B cell (primary cell): ENCODE measurements at regions of chr6 and their contacts with region 1.

Region 1: DNA sequence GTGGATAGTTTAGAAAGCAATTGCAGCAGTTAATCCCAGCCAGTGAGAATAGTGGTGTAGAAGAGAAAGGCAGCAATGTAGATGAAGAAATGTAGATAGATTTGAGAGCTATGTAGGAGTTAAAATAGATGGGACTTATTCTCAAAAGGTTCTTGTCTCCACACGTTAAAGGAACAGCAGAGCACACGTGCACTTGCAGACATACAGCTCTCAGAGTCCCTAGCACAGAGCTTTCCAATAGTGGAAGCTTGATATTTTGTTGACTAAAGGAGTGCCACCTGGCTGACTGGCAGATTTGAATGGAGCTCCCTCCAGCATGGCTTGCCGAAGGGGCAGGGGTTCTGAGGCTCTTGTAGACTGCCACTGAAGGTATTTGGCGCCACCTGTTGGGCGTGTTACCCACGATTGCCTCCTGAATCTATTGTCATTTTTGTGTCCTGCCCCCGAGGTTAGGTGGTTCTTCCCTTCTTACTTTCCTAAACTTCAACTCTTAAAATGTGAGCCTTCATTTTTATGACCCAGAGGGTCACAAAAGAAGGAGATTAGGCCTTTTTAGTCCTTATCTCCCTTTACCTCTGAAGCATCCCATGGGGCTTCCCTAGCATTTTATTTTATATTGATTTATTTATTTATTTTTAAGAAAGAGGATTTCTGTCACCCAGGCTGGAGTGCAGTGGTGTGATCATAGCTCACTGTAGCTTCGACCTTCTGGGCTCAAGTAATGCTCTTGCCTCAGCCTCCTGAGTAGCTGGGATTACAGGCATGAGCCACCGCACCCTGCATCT is 16.4 kb downstream of the BRD2 start:
- DNase-seq: peak; percentile 92
- ATAC-seq: peak; percentile 95
- H3K4me3 ChIP-seq: no peak overlapping the region
- H3K4me3 Mint-ChIP-seq: no peak overlapping the region
- H3K27ac ChIP-seq: peak overlapping the region; percentile 13 to 60
- H3K27ac Mint-ChIP-seq: peak overlapping the region; percentile 28
- H3K4me1 ChIP-seq: peaks cover 17 to 19% of the 10 kb centered on the region in 2 donors
- H3K4me1 Mint-ChIP-seq: peaks cover 33% of the 10 kb centered on the region
- H3K27me3 ChIP-seq: no peaks in the 10 kb centered on the region
- H3K27me3 Mint-ChIP-seq: no peaks in the 10 kb centered on the region
- CTCF ChIP-seq: peak; percentile 91

Region 2: GRCh38 chr6:32838114-32838958 is 146.5 kb before region 1 on chr6 and contains the start of gene TAP2:
- CTCF ChIA-PET with region 1: interaction called, 63 read pairs
- POLR2A ChIA-PET with region 1: interaction called, 5 read pairs
- intact Hi-C with region 1: loop called (anchors 1 kb)
- DNase-seq: peak; percentile 97
- ATAC-seq: peak; percentile 84
- H3K4me3 ChIP-seq: peak within 1 kb of the TSS; percentile 71 to 80 (median 76)
- H3K4me3 Mint-ChIP-seq: peak within 1 kb of the TSS; percentile 97
- H3K27ac ChIP-seq: peak within 1 kb of the TSS; percentile 83 to 97
- H3K27ac Mint-ChIP-seq: peak within 1 kb of the TSS; percentile 99
- H3K4me1 ChIP-seq: peaks cover 59 to 73% of the 10 kb centered on the region in 2 donors
- H3K4me1 Mint-ChIP-seq: peaks cover 92% of the 10 kb centered on the region
- H3K27me3 ChIP-seq: no peaks in the 10 kb centered on the region
- H3K27me3 Mint-ChIP-seq: no peaks in the 10 kb centered on the region
- CTCF ChIP-seq: peak; percentile 90
- total RNA-seq, gene TAP2: 126 and 135 TPM in 2 replicates

Region 3: DNA sequence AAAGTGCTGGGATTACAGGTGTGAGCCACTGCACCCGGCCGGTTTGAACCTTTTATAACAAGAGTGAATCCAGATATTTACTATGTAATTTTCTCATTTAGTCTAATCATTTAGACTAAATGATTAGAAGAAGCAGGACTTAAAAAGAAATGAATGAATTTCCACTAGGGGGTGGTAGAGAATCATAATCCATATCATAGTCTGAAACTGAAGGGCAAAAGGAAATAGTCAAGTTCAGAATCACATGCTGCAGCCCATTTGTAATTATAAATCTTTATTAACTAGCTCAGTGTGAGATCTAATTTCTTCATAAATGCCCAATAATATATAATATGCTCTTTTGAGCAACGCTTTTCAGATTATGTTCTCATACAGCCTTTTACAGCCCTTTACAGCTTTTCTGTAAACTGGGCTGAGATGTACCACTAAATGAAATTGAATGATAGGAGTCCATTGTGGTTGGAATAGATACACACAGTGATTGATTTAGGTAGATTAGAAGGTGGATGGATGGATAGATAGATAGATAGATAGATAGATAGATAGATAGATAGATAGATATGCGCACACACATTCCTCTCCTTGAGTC is 99.0 kb before region 1 on chr6:
- CTCF ChIA-PET with region 1: interaction called, 305 read pairs
- POLR2A ChIA-PET with region 1: no interaction called
- intact Hi-C with region 1: loop called (anchors 1 kb)
- DNase-seq: peak; percentile 87
- ATAC-seq: peak; percentile 65
- H3K4me3 ChIP-seq: no peak overlapping the region
- H3K4me3 Mint-ChIP-seq: no peak overlapping the region
- H3K27ac ChIP-seq: no peak overlapping the region
- H3K27ac Mint-ChIP-seq: no peak overlapping the region
- H3K4me1 ChIP-seq: peaks cover 14 to 15% of the 10 kb centered on the region in 2 donors
- H3K4me1 Mint-ChIP-seq: peaks cover 23% of the 10 kb centered on the region
- H3K27me3 ChIP-seq: no peaks in the 10 kb centered on the region
- H3K27me3 Mint-ChIP-seq: no peaks in the 10 kb centered on the region
- CTCF ChIP-seq: peak; percentile 78

Region 4: DNA sequence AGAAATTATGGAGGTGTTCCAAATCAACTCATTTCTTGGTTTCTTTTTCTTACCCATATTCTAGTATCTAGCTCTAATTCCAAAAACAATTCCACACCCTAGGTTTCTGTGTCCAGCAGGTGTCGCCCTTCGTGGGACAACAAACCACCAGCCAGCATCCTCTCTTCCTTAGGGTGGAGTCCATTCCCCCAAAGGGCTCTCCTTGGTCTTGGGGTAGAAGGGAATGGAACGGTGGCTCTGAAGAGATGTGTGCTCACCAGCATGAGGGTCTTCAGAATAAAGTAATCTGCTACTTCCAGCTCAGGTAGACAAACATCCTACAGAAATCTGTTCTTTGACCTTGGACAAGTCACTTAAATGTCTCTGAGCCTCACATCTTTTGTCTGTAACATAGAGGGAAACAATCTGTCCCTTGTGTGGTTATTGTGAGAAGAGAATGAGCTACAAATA is 51.1 kb before region 1 on chr6:
- CTCF ChIA-PET with region 1: interaction called, 155 read pairs
- POLR2A ChIA-PET with region 1: interaction called, 6 read pairs
- intact Hi-C with region 1: loop called (anchors 1 kb)
- DNase-seq: peak; percentile 82
- ATAC-seq: peak; percentile 60
- H3K4me3 ChIP-seq: no peak overlapping the region
- H3K4me3 Mint-ChIP-seq: peak overlapping the region; percentile 30
- H3K27ac ChIP-seq: peak overlapping the region; percentile 3 to 98
- H3K27ac Mint-ChIP-seq: peak overlapping the region; percentile 84
- H3K4me1 ChIP-seq: peaks cover 76 to 85% of the 10 kb centered on the region in 2 donors
- H3K4me1 Mint-ChIP-seq: peaks cover 88% of the 10 kb centered on the region
- H3K27me3 ChIP-seq: no peaks in the 10 kb centered on the region
- H3K27me3 Mint-ChIP-seq: no peaks in the 10 kb centered on the region
- CTCF ChIP-seq: peak; percentile 84

Region 5: DNA sequence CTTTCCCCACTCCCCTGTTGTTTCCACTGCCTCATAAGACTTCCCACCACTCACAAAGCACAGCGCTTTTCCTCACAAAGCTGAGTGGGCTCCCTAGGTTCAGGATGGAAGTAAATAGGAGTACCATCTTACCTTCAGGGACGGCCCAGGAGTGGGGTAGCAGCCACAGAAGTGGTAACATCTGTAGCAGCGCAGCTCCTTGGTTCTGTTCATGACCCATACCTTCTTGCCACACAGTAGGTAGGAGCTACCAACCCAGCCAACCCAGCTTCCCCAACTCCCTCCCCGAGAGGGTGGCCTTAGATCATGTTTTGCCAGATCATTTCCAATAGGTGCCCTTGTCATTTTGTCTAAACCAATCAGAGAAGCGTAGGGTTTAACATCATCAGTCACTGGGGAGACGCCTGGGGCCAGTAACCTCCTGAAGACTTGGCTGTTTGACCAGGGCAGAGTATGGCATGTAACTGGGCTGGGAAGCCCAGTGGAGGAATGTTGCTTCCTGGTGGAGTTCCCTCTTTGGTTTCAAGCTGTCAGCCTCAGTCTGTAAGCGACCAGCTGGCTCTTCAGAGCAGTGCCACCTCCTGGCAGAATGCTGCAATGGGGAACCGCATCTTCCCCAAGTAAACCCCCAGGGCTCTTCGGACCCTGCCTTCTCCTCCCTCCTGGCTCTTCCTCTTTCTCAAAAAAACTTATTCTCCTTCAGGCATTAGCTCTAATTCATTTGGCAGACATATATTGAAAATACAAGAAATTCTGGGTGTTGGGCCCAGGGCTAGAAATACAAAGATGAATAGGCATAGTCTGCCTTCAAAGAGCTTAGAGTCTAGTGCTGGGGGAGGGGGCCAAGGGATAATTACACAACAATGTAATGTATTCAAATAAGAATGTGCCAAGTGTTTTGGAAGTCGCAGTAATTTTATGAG is 31.7 kb before region 1 on chr6 and contains the start of gene HLA-DMA:
- CTCF ChIA-PET with region 1: interaction called, 822 read pairs
- POLR2A ChIA-PET with region 1: interaction called, 7 read pairs
- intact Hi-C with region 1: loop called (anchors 1 kb)
- DNase-seq: peak; percentile 97
- ATAC-seq: peak; percentile 91
- H3K4me3 ChIP-seq: peak within 1 kb of the TSS; percentile 72 to 98 (median 93)
- H3K4me3 Mint-ChIP-seq: peak within 1 kb of the TSS; percentile 96
- H3K27ac ChIP-seq: peak within 1 kb of the TSS; percentile 91 to 92
- H3K27ac Mint-ChIP-seq: peak within 1 kb of the TSS; percentile 98
- H3K4me1 ChIP-seq: peaks cover 70 to 84% of the 10 kb centered on the region in 2 donors
- H3K4me1 Mint-ChIP-seq: peaks cover 85% of the 10 kb centered on the region
- H3K27me3 ChIP-seq: no peaks in the 10 kb centered on the region
- H3K27me3 Mint-ChIP-seq: no peaks in the 10 kb centered on the region
- CTCF ChIP-seq: peak; percentile 88
- total RNA-seq, gene HLA-DMA: 554 and 558 TPM in 2 replicates

Region 6: DNA sequence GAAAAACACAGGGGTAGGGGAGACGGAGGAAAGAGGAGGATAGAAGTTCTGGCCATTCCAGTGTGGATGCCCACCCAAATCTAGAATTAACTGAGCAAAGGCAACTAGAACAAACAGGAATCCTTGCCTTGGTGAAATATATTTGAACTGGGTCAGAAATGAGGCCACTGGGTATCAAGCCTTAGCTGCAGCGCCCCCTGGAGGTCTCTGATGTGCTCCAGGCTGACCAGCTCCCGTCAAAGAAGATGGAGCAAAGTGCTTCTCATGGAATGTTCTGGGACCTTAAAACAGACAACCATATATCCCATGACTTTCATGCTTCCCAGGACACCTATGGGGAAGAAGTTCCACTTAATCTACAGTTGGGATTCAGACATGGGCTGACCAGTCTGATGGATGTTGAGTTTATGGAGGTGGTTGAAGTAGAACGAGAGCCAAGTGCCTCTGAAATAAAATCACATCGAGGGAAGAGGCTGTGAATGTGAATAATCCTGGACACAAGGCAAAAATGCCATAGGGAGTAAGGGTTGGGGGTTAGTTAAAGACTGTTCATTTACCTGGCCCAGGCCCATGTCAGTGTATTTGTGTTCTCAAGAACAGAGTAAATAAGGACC is 141.4 kb after region 1 on chr6:
- CTCF ChIA-PET with region 1: interaction called, 11 read pairs
- POLR2A ChIA-PET with region 1: no interaction called
- intact Hi-C with region 1: no loop called
- DNase-seq: peak; percentile 77
- ATAC-seq: peak; percentile 63
- H3K4me3 ChIP-seq: no peak overlapping the region
- H3K4me3 Mint-ChIP-seq: no peak overlapping the region
- H3K27ac ChIP-seq: no peak overlapping the region
- H3K27ac Mint-ChIP-seq: peak overlapping the region; percentile 59
- H3K4me1 ChIP-seq: peaks cover 0 to 10% of the 10 kb centered on the region in 2 donors
- H3K4me1 Mint-ChIP-seq: peaks cover 5% of the 10 kb centered on the region
- H3K27me3 ChIP-seq: no peaks in the 10 kb centered on the region
- H3K27me3 Mint-ChIP-seq: no peaks in the 10 kb centered on the region
- CTCF ChIP-seq: peak; percentile 87